ENCODE measurements at regions of chr10 and their contacts with region 1.

Region 1: GRCh38 chr10:88553116-88553752 is 29.9 kb downstream of the RNLS start:
- DNase-seq: peak; percentile 41
- CTCF ChIP-seq: peak; percentile 76

Region 2: GRCh38 chr10:87850742-87851205 is 702.5 kb before region 1 on chr10:
- in situ Hi-C with region 1: loop called (anchors 10 kb)
- DNase-seq: peak; percentile 30
- CTCF ChIP-seq: peak; percentile 46

Region 3: DNA sequence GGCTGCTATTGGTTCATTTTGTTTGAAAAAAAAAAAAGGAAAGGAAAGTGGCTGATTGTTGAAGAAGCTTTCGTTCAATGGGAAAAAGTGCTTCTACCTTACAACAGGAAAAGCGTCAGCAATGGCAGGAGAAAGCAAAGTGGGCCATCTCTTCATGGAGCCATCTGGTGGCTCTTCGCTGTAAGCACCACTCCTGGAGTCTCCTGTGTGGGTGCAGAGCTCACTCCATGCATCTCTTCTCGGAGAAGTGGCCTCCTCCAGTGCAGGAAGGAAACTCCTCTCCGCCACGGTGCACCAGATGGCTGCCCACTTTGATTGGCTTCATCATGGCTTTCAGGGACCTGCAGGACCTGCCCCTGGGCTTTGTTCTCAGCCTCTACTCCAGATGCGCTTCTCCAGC is 438.9 kb before region 1 on chr10:
- in situ Hi-C with region 1: loop called (anchors 10 kb)
- DNase-seq: no peak
- CTCF ChIP-seq: peak; percentile 63

Region 4: DNA sequence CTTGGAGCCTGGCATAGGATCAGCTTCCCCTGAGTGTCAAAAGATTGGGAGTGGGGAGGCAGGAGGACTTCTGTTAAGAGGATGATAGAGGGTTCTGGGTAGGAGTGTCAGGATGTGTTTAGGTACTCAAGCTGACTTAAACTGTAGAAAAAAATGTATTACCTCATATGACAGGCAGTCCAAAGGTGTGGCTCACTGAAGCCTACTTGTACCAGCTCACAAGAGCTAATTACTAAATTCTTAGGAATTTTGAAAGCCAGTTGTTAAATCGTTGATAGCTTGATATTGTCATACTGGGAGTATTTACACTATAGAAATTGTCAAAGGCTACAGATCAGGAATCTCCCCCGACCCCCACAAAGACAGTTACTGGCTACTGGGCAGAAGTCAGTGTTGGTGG is 469.5 kb after region 1 on chr10:
- in situ Hi-C with region 1: no loop called
- DNase-seq: no peak
- CTCF ChIP-seq: no peak

Region 5: DNA sequence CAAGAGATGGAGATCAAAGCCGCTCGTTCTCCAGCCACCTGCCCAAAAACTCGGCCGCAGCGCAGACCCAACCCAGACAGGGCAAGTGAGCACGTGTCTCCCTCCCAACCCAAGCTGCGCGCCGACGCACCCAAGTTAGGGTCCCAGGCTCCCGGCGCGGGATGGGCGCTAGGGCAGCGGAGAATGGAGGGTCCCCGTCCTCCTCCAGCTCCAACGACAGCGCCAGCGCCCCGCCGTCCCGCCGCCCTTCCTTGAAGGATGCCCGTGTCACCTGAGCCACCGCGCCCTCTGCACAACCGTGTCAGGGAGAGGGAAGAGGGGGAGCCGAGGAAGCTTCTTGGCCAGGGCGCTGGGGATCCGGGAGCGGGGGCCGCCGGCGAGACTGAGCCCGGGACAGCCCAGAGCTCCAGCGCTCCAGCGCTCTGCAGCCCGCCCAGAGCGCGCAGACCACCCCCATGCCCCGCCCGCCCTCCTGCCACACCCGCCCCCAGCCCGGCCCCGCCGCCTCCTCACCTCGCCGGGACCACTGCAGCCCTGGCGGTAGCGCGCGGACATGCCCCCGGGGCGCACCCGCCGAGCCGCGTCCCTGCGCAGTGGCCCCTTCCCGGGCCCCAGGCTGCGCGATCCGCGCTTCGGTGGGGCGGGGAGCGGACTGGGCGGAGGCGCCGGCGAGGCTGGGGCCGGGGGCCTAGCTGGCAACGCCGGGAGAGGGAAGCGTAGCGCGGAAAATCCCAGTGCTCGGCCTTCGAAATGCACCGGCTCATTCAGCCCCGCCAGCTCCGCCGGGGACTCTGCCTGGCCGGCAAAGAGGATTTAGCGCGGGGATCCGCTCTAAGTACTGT is 982.2 kb after region 1 on chr10 and contains the start of gene SLC16A12:
- in situ Hi-C with region 1: no loop called
- DNase-seq: peak; percentile 38
- CTCF ChIP-seq: no peak